RWPE1 (cell line): ENCODE measurements at regions of chr6 and their contacts with region 1.

Region 1: DNA sequence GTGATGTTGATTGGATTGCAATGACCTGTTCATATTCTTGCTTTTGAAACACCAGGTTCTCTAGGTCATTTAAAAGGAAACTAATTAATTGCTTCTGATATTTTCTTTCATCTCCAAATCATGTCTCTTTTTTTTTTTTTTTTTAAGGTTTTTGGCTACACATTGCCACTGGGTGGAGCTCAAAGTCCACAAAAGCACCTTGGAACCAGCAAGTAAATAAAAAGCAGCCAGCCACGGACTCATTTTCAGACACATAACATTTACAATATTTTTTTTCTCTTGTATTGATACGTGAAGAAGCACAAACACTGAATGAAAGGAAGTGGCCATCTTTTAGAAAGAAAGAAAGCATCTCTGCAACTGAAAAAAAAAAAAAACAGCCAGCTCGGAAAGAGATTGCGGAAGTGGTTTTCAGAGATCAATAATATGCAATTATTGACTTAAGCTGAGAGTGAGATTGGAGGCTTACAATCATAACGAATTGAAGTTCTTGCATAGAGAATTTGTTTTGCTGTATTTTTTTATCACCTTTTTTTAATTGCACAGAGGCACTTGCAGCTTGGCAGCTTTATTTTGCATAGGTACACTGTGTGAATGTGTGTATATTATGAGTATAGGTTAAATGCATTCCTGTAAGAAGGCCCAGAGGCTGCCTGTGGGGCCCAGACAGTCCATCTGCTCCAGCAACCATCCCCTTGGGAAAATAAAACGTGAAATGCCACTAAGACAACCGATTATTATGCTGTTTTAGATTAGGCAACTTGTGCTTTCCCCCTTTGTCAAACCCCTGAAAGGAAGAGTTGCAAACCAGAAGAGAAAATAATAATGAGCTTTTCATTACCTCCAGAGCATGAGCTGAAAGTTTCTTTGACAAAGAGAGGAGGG is 28.2 kb downstream of the CGA start:
- DNase-seq: peak; percentile 41
- H3K27ac ChIP-seq: no peak overlapping the region
- CTCF ChIP-seq: peak; percentile 48

Region 2: DNA sequence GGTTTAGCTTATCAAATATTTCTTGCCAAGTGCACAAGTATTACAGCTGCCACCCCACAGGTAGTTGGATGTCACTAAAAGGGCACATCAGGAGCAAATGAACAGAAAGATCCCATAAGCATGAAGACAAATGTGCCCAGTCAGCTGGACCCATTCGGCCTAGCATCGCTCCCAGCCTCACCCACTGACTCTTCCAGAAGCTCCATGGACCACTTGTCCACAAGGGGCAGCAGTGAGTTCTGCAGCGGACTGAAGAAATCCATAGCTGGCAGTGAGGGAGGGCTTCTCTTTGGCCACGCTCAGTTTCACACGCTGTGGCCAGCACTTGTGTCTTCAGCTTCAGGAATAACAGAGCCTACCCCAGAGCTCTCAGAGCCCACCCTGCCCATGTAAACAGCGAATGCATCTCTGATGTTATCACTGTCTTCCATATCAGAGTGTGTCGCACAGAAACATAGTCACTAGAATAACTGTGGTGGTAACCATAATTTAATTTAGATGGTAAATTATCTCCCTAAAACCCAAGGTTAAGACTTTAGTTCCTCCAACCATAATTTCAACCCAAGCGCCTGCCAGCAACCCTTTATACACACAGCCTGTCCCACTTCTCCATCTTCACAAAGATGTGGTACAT is 12.4 kb after region 1 on chr6:
- CTCF ChIA-PET with region 1: interaction called, 24 read pairs
- POLR2A ChIA-PET with region 1: no interaction called
- DNase-seq: peak; percentile 78
- H3K27ac ChIP-seq: no peak overlapping the region
- CTCF ChIP-seq: peak; percentile 88